T-cell (primary cell): ENCODE measurements at regions of chr6 and their contacts with region 1.

Region 1: DNA sequence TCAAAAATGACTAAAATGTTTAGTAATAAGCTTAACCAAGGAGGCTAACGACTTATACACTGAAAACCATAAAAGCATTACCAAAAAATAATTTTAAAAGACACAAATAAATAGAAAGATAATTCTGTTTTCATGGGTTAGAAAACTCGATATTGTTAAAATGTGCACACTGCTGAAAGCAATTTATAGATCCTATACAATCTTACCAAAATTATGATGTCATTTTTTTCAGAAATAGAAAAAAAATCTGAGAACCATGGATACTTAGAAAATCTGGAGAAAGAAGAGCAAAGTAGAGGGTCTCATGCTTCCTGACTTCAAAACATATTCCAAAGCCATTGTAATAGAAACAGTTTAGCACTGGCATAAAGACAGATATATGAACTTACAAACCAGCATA is 46.6 kb downstream of the HCRTR2 start:
- DNase-seq: no peak
- ATAC-seq: no peak
- H3K4me3 ChIP-seq: no peak overlapping the region
- H3K4me3 Mint-ChIP-seq: no peak overlapping the region
- H3K27ac ChIP-seq: no peak overlapping the region
- H3K27ac Mint-ChIP-seq: no peak overlapping the region
- H3K4me1 ChIP-seq: no peaks in the 10 kb centered on the region
- H3K4me1 Mint-ChIP-seq: no peaks in the 10 kb centered on the region
- H3K27me3 ChIP-seq: no peaks in the 10 kb centered on the region
- H3K27me3 Mint-ChIP-seq: no peaks in the 10 kb centered on the region

Region 2: DNA sequence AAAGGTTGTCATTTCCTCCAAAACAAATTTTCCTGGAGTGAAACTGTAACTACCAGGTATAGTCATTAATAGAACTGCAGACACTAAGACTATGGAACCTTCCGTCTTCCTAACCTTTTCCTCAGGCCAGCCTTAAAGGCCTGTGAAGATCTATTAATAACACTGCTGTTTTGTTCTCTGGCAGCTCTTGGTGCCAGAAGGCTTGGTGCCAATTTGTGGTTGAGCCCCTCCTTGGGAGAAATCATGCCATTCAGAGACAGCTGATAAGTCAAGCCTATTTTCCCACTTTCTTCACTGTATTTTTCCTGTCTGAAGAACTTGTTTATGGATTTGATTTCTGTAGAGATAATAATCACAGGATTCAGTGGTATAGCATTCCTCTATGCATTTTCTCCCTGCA is 18.1 kb after region 1 on chr6:
- CTCF ChIA-PET with region 1: no interaction called
- POLR2A ChIA-PET with region 1: interaction called in 1 of 2 experiments, 13 read pairs
- DNase-seq: no peak
- ATAC-seq: no peak
- H3K4me3 ChIP-seq: no peak overlapping the region
- H3K4me3 Mint-ChIP-seq: no peak overlapping the region
- H3K27ac ChIP-seq: no peak overlapping the region
- H3K27ac Mint-ChIP-seq: no peak overlapping the region
- H3K4me1 ChIP-seq: no peaks in the 10 kb centered on the region
- H3K4me1 Mint-ChIP-seq: no peaks in the 10 kb centered on the region
- H3K27me3 ChIP-seq: no peaks in the 10 kb centered on the region
- H3K27me3 Mint-ChIP-seq: no peaks in the 10 kb centered on the region